A549 (cell line): ENCODE measurements at regions of chr2 and their contacts with region 1.

Region 1: DNA sequence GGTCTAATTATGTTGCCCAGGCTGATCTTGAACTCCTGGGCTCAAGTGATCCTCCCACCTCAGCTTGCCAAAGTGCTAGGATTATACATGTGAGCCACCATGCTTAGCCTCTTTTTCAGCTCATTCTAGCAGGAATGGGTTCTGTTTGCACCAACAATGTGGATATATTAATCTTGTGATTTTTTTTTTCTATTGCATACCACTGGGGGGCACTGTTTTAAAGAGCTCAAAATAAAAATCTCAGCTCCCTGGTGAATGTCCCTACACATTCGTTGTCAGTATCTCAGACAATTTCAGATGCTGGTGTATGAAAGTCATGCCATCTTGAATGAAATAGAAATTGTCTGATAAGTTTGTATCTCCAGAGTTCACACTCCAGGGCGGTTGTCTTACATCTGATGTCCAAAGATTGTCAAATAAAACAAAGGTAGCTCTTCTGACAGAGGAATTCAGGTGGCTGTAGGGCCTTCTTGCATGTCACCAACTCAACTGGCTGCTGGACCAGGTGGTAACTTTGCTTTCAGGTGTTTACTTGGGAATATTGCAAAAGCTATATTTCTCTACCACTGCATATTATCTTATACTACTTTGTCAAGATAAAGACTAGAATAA is 3.1 kb upstream of the MATN3 start:
- DNase-seq: peak; percentile 40 to 70
- ATAC-seq: peak in 1 of 2 experiments; percentile 42; a peak in 3 of 6 replicates
- H3K4me3 ChIP-seq: no peak overlapping the region
- H3K27ac ChIP-seq: no peak overlapping the region
- H3K4me1 ChIP-seq: peaks cover 10% of the 10 kb centered on the region; the same call in 1 of the 3 replicates
- CTCF ChIP-seq: peak; percentile 84
- EP300 ChIP-seq: no peak
- POLR2A ChIP-seq: no peak
- RAD21 ChIP-seq: peak; percentile 75 to 76

Region 2: GRCh38 chr2:19819097-19820065 is 196.2 kb before region 1 on chr2:
- CTCF ChIA-PET with region 1: no interaction called
- POLR2A ChIA-PET with region 1: no interaction called
- DNase-seq: peak in 1 of 2 experiments; percentile 65
- ATAC-seq: peak; percentile 55 to 81; a peak in 3 of 6 replicates
- H3K4me3 ChIP-seq: no peak overlapping the region
- H3K27ac ChIP-seq: peak overlapping the region in 1 of 2 experiments; percentile 32; a peak in 2 of 6 replicates
- H3K4me1 ChIP-seq: peaks cover 18% of the 10 kb centered on the region
- CTCF ChIP-seq: no peak
- EP300 ChIP-seq: no peak
- POLR2A ChIP-seq: no peak
- RAD21 ChIP-seq: no peak

Region 3: GRCh38 chr2:19971691-19972090 is 43.9 kb before region 1 on chr2:
- CTCF ChIA-PET with region 1: interaction called, 11 read pairs
- POLR2A ChIA-PET with region 1: no interaction called
- DNase-seq: no peak
- ATAC-seq: no peak
- H3K4me3 ChIP-seq: no peak overlapping the region
- H3K27ac ChIP-seq: no peak overlapping the region
- H3K4me1 ChIP-seq: no peaks in the 10 kb centered on the region
- CTCF ChIP-seq: no peak
- EP300 ChIP-seq: no peak
- POLR2A ChIP-seq: no peak
- RAD21 ChIP-seq: no peak

Region 4: GRCh38 chr2:20001361-20001863 is 14.2 kb before region 1 on chr2:
- CTCF ChIA-PET with region 1: interaction called, 25 read pairs
- POLR2A ChIA-PET with region 1: no interaction called
- DNase-seq: no peak
- ATAC-seq: no peak
- H3K4me3 ChIP-seq: no peak overlapping the region
- H3K27ac ChIP-seq: no peak overlapping the region
- H3K4me1 ChIP-seq: no peaks in the 10 kb centered on the region
- CTCF ChIP-seq: no peak
- EP300 ChIP-seq: no peak
- POLR2A ChIP-seq: no peak
- RAD21 ChIP-seq: no peak

Region 5: DNA sequence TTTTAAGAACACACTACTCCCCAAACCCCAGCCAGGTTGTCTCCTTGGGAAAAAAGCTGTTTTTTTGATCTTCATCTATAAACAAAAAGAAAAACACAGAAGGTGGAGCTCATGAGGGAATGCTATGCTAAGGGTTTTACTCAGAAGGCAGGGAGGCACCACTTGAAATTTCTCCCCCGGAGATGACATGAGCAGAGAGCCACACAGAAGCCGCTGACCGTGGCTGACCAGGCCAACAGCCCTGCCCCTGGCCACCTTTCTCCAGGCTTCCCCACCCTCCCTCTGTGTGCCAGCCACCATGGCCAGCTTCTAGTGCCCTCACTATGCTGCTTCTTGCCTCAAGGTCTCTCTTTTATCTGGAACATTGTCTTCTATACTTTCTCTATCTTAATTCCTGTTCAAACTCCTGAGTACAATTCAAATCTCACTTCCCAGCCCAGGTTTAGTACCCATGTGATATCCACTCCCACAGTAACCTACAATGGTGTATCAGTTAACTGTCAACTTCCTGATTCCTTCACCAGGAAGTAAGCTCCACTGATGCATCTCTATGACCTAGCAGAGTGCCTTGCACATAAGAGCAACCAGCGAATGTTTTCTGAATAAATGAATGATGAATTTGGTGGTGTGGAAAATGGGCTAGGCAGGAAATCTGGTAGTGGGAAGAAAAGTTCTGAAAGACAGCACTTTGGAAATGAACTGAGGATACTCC is 20.5 kb after region 1 on chr2:
- CTCF ChIA-PET with region 1: interaction called, 40 read pairs
- POLR2A ChIA-PET with region 1: interaction called, 5 read pairs
- DNase-seq: no peak
- ATAC-seq: peak in 1 of 2 experiments; percentile 53; a peak in 1 of 6 replicates
- H3K4me3 ChIP-seq: no peak overlapping the region
- H3K27ac ChIP-seq: no peak overlapping the region
- H3K4me1 ChIP-seq: peaks cover 7% of the 10 kb centered on the region; the same call in 2 of the 3 replicates
- CTCF ChIP-seq: no peak
- EP300 ChIP-seq: no peak
- POLR2A ChIP-seq: no peak
- RAD21 ChIP-seq: no peak

Region 6: GRCh38 chr2:20051532-20052228 is 36.1 kb after region 1 on chr2 and contains the start of gene LAPTM4A:
- CTCF ChIA-PET with region 1: interaction called, 18 read pairs
- POLR2A ChIA-PET with region 1: interaction called, 11 read pairs
- DNase-seq: peak; percentile 99 to 100
- ATAC-seq: peak; percentile 95 to 97
- H3K4me3 ChIP-seq: peak within 1 kb of the TSS; percentile 63
- H3K27ac ChIP-seq: peak within 1 kb of the TSS; percentile 92 to 96
- H3K4me1 ChIP-seq: peaks cover 31% of the 10 kb centered on the region
- CTCF ChIP-seq: no peak
- EP300 ChIP-seq: no peak
- POLR2A ChIP-seq: peak; percentile 67
- RAD21 ChIP-seq: no peak
- polyA plus RNA-seq, gene LAPTM4A: 509 and 655 TPM in 2 replicates

Region 7: DNA sequence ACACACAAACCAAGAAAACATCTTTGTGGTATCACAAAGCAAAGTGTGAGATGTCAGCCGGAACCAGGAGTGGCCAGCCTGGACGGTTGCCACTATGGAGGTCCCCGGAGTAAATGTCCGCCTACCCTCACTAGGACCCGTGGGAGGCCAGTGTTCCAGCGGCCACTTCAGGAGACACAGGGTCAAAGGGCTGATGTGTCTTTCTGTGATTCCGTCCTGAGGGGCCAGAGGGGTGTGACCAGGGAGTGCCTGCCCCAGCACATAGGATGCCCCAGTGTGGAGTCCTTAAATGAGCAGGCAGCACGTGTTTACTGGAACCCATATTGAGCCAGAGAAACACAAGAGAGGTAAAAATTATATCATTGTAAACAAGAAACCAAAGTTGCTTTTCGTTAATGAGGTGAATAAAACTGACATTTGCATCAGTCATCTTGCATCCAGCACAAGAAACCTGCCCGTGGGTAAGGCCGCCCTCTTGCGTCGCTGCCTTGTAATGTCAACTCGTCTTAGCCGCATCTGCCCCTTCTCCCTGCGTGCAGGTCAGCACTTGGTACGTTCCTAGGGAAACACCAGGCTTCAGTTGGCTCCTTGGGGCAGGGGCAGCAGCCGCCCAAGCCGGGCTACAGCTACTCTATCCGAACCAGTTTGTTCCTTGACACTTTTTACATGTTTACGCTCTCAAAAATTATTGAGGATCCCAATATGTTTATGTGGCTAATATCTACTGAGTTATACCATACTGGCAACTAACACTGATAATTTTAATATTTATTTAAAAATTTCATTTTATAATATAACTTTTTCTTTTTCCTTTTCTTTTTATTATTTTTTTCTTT is 82.5 kb after region 1 on chr2:
- CTCF ChIA-PET with region 1: interaction called, 146 read pairs
- POLR2A ChIA-PET with region 1: interaction called, 5 read pairs
- DNase-seq: peak; percentile 93 to 96
- ATAC-seq: peak; percentile 84 to 90
- H3K4me3 ChIP-seq: no peak overlapping the region
- H3K27ac ChIP-seq: peak overlapping the region; percentile 22 to 71; a peak in 4 of 6 replicates
- H3K4me1 ChIP-seq: peaks cover 18% of the 10 kb centered on the region; the same call in 2 of the 3 replicates
- CTCF ChIP-seq: peak; percentile 99
- EP300 ChIP-seq: no peak
- POLR2A ChIP-seq: no peak
- RAD21 ChIP-seq: peak; percentile 99 to 100

Region 8: DNA sequence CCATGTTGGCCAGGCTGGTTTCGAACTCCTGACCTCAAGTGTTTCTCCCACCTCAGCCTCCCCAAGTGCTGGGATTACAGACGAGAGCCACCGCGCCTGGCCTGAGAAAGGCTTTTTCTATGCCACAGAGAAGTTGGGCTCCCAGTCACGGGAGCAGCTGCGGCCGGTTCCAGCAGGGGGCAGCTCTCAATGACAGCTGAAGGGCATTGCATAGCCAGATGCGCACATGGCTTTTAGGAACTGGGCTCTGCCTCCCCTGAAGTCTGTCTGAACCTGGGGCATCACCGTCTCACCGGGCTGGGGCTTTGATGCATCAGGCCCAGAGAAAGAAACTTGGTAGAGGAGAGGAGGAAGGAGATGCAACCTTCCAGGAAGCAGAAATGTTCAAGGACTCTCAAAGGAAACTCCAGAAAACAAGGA is 120.1 kb after region 1 on chr2:
- CTCF ChIA-PET with region 1: interaction called, 12 read pairs
- POLR2A ChIA-PET with region 1: no interaction called
- DNase-seq: peak; percentile 71 to 75
- ATAC-seq: peak; percentile 81 to 90
- H3K4me3 ChIP-seq: no peak overlapping the region
- H3K27ac ChIP-seq: peak overlapping the region; percentile 10 to 61; a peak in 5 of 6 replicates
- H3K4me1 ChIP-seq: peaks cover 26% of the 10 kb centered on the region
- CTCF ChIP-seq: peak; percentile 89
- EP300 ChIP-seq: no peak
- POLR2A ChIP-seq: no peak
- RAD21 ChIP-seq: peak; percentile 91 to 92